ENCODE measurements at regions of chr16 and their contacts with region 1.

Region 1: DNA sequence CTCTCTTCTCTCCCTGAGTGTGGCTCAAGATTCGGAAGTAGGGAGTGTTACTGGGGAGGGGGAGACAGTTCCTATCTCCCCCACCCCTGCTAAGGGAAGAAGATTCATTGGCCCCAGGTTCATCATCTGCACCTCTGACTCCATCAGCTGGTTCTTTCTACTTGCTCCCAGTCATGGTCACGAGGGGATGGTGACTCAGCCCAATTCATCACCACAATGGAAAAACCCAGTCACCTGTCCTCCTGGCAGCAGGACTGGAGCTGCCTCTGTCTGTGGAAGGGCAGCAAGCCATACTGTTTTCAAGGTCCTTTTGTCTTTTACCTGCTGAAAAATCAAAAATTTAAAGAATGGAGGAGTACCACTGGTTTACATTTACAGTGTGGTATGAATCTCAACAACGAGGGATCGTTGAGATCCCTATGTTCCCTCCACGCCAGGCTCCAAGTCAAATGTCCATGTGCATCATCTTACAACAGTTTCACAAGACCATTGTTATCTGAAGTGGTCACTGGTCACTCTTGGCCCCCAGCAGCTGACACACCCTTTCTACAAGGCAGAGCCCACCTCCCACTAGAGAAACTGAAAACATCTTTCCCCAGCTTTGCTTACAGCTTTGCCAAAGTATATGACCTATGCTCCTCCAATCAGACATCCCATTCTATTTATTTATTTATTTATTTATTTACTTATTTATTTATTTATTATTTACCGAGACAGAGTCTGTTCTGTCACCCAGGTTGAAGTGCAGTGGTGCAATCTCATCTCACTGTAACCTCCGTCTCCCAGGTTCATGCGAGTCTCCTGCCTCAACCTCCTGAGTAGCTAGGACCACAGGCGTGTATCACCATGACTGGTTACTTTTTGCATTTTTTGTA is 40.4 kb upstream of the NDRG4 start:
- DNase-seq: peak; percentile 50
- ATAC-seq: peak in 1 of 2 donors; percentile 22

Region 2: DNA sequence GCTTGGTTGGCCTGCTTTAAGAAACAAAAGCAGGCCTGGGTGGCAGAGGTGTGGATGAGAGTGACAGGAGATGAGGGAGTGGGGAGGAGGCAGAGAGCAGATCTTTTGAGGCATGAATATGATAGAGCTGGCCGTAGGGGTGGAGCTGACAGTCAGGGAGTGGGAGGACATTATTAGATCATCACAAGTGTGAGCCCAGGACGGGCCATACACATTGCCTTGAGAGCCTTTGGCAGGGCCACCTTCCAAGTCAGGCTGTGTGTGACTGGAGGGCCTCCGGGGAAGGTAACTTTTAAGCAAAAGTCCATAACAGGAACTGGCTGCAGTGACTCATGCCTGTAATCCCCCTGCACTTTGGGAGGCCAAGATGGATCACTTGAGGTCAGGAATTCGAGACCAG is 41.0 kb before region 1 on chr16:
- intact Hi-C with region 1: loop called in 1 of 2 experiments (anchors 10 kb)
- DNase-seq: peak; percentile 76
- ATAC-seq: peak; percentile 83 to 89

Measured in left cardiac atrium (tissue), 4 donors.